ENCODE measurements at regions of chr3 and their contacts with region 1.

Region 1: GRCh38 chr3:58177747-58178527 is 32.8 kb downstream of the DNASE1L3 start:
- DNase-seq: peak; percentile 51
- ATAC-seq: peak; percentile 89
- H3K4me3 ChIP-seq: peak overlapping the region; percentile 43 to 51
- H3K27ac ChIP-seq: no peak overlapping the region; the same call in 1 of the 2 replicates
- H3K4me1 ChIP-seq: peaks cover 19 to 51% of the 10 kb centered on the region in 2 experiments; a peak in 3 of 4 replicates
- H3K27me3 ChIP-seq: no peaks in the 10 kb centered on the region
- CTCF ChIP-seq: peak; percentile 76 to 87 (median 87)
- POLR2A ChIP-seq: no peak
- RAD21 ChIP-seq: peak; percentile 83

Region 2: DNA sequence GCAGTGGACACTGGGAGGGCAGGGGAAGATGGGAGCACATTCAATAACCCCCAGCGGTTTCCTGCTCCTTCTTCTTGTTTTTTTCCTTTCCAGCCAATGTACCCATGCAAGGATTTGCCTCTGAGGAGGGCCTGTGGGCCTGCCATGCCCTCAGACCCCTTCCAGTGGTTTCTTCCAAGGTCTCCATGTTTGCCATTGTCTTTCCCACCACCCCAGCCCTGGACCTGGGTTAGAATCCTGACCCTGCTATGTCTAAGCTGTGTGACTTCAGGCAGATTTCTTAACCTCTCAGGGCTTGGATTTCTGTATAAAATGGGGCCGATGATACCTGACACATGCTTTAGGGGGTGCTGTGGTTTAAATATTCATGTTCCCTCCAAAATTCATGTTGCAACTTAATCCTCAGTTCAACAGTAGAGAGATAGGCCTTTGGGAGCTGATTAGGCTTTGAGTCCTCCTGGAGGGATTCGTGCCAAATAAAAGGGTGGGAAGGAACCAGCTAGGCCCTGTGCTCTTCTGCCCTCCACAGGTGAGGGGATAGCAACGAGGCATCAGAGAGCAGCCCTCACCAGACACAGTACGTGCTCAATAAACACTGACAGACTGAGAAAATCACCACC is 216.0 kb before region 1 on chr3:
- CTCF ChIA-PET with region 1: interaction called, 3 read pairs
- POLR2A ChIA-PET with region 1: no interaction called
- RAD21 ChIA-PET with region 1: interaction called, 3 read pairs
- intact Hi-C with region 1: loop called (anchors 1 kb)
- DNase-seq: peak; percentile 56
- ATAC-seq: peak; percentile 77
- H3K4me3 ChIP-seq: no peak overlapping the region
- H3K27ac ChIP-seq: no peak overlapping the region
- H3K4me1 ChIP-seq: peaks cover 8 to 16% of the 10 kb centered on the region in 2 experiments; a peak in 3 of 4 replicates
- H3K27me3 ChIP-seq: no peaks in the 10 kb centered on the region
- CTCF ChIP-seq: peak; percentile 40 to 61 (median 43); a peak in 5 of 6 replicates
- POLR2A ChIP-seq: no peak
- RAD21 ChIP-seq: peak; percentile 78

Region 3: GRCh38 chr3:58008140-58009025 is 169.6 kb before region 1 on chr3 and contains the start of gene FLNB:
- CTCF ChIA-PET with region 1: interaction called, 4 read pairs
- POLR2A ChIA-PET with region 1: interaction called, 3 read pairs
- RAD21 ChIA-PET with region 1: interaction called, 4 to 6 read pairs
- intact Hi-C with region 1: loop called (anchors 1 kb)
- DNase-seq: peak; percentile 48
- ATAC-seq: peak; percentile 80
- H3K4me3 ChIP-seq: peak within 1 kb of the TSS; percentile 80 to 85
- H3K27ac ChIP-seq: peak within 1 kb of the TSS; percentile 87
- H3K4me1 ChIP-seq: peaks cover 28 to 46% of the 10 kb centered on the region in 2 experiments
- H3K27me3 ChIP-seq: no peaks in the 10 kb centered on the region
- CTCF ChIP-seq: peak; percentile 55 to 73 (median 71); a peak in 5 of 6 replicates
- POLR2A ChIP-seq: peak; percentile 93
- RAD21 ChIP-seq: peak; percentile 85
- total RNA-seq, gene FLNB: 116 TPM

Region 4: GRCh38 chr3:58167431-58168351 is 10.2 kb before region 1 on chr3:
- CTCF ChIA-PET with region 1: interaction called, 19 read pairs
- POLR2A ChIA-PET with region 1: no interaction called
- RAD21 ChIA-PET with region 1: interaction called in 1 of 2 experiments, 3 read pairs
- intact Hi-C with region 1: no loop called
- DNase-seq: no peak
- ATAC-seq: peak; percentile 92
- H3K4me3 ChIP-seq: no peak overlapping the region
- H3K27ac ChIP-seq: no peak overlapping the region
- H3K4me1 ChIP-seq: peaks cover 22 to 43% of the 10 kb centered on the region in 2 experiments
- H3K27me3 ChIP-seq: no peaks in the 10 kb centered on the region
- CTCF ChIP-seq: peak; percentile 36 to 99 (median 95); a peak in 5 of 6 replicates
- POLR2A ChIP-seq: no peak
- RAD21 ChIP-seq: peak; percentile 43

Region 5: DNA sequence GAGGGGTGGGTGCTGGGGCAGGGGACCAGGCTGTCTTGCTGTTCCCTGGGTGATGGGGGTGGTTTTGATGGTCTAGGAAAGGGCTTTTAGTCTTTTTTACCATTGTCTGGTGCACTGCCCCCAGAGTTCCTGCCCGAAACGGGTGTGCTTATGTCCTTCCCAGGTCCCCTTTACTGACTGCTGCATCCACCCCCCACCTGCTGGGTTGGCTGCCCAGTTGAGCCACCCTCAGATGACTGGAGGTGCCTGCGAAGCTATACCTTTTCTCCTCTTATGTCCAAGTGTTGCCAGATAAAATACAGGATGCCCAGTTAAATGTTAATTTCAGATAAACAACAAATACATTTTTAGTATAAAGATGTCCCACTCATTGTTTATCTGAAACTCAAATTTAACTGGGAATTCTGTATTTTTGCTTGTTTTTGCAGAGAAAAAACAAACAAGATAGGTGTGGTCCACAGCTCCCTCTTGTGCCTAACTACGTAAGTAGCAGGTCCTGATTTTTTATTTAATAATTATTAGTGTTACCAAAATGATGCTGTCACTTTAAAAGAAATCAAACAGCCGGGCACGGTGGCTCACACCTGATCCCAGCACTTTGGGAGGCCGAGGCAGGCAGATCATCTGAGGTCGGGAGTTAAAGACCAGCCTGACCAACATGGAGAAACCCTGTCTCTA is 122.0 kb after region 1 on chr3:
- CTCF ChIA-PET with region 1: interaction called, 17 read pairs
- POLR2A ChIA-PET with region 1: no interaction called
- RAD21 ChIA-PET with region 1: interaction called in 1 of 2 experiments, 3 read pairs
- intact Hi-C with region 1: no loop called
- DNase-seq: no peak
- ATAC-seq: peak; percentile 79
- H3K4me3 ChIP-seq: no peak overlapping the region
- H3K27ac ChIP-seq: no peak overlapping the region
- H3K4me1 ChIP-seq: no peaks in the 10 kb centered on the region
- H3K27me3 ChIP-seq: no peaks in the 10 kb centered on the region
- CTCF ChIP-seq: peak; percentile 52 to 93 (median 64)
- POLR2A ChIP-seq: no peak
- RAD21 ChIP-seq: peak; percentile 93